ENCODE measurements at regions of chr17 and their contacts with region 1.

Region 1: DNA sequence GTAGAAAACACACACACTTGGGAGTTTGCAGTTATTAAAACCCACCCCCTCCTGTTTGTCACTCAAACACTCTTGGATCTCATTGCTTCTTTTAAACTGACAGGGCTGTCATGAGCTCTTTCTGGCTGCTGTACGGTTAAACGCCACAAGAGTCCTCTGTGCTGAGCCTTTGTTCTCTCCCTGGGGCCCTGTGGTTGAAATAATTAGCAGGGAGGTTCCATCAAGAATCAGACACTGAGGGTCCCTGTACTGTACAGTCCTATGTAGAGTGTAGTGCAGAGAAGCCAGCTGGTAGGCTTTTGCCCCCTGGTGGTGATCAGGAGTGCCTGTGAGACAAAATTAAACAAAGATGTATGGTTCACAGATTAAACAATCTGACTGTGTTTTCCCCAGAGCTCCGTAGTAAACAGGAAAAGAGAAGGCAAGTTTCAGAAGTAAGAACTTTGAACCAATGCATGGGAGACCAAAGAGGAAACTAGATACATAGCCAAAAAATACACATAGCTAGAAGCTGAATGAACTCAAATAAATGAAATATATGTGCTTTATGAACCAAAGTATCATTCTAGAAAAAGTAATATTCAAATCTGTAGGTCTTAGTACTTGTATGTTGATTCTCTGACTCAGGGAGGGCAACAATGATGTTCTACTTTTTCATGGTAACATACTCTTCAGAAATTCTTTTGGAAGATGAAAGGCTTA is 1.4 kb upstream of the SSH2 start:
- DNase-seq: peak; percentile 66
- ATAC-seq: peak; percentile 84

Region 2: DNA sequence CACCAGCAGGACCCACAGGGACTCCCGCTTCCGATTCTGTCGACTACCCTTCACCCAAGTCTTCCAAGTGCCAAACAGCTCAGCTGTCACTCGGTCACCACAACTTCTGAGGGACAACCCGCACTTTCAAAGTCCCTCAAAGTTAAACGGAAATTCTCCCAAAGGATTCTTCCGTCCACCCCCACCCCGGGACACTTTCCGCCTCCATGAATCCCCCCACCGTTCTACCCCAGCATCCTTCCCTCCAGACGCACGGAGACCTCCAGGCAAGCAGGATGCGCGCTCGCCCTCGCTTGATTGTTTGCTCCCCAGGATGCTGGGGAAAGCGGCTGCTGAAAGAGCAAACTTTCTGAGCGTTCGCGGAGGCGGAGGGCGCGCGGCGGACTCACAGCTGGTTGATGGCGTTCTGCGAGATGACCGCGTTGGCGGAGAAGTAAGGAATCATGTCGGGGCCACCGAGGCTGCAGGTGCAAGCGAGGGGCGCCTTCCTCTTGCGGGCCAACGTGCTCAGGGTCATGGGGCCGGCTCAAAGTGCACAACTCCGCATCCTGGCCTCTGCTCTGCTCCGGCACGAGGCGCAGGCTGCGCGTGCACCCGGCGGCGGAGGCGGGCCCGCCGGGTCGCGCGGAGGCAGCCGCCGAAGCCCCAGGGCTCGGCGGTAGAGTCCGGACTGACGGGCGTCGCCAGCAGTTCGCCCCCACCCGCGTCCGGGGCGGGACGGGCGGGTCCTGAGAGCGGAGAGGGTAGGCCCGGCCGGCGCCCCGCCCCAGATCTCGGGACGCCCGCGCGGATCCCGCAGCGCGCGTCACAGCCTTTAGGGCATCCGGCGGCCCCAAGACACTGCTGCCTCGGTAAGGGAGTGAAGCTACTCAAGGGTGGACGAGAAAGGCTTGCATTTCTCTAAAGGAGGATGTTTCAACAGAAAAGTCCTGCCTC is 170.4 kb before region 1 on chr17:
- intact Hi-C with region 1: no loop called
- DNase-seq: peak; percentile 92
- ATAC-seq: peak; percentile 97

Region 3: GRCh38 chr17:29807520-29808351 is 123.6 kb before region 1 on chr17:
- intact Hi-C with region 1: loop called (anchors 10 kb)
- DNase-seq: peak; percentile 82
- ATAC-seq: peak; percentile 80